Heart left ventricle (tissue), 16 donors: ENCODE measurements at regions of chr19 and their contacts with region 1.

Region 1: DNA sequence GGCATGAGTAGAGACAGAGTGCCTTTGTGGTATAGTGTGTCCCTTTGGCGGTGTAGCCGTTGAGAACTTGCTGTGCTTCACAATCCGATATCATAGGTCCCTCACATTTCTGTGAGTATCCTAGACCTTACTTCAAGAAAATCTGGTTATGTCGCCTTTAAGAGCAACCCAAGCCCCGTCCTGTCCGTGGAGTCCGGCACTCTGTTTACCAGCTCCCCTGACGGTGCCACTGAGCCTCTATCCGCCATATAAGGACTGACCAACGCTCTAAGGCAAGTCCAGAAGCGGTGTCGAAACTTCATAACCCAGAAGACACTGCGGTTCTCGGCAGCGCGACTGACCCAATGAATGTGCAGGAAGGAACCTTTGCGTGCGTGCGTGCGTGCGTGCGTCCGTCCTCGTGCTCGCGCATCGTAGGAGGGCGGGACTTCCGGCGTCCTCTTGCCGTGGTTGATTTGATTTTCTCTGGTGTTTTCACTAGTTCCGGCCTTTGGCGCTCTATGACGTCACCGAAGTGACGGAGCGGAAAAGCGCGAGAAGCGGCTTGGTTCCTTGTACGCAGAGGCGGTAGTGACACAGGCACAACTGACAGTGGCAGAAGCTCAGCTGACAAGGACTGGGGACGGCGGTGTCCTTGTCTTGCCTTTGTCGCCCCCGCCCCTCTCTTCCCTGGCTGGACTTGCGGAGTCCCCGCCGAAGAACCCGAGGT is at the starts of genes TRAPPC2B and ZNF547:
- DNase-seq: peak; percentile 99 to 100 (median 99)
- ATAC-seq: peak; percentile 94 to 97 (median 96)
- H3K4me3 ChIP-seq: peak within 1 kb of the TSS; percentile 62 to 97 (median 82)
- H3K27ac ChIP-seq: peak within 1 kb of the TSS; percentile 83 to 98 (median 94)
- H3K4me1 ChIP-seq: peaks cover 0 to 37% (median 20%) of the 10 kb centered on the region in 12 donors
- H3K27me3 ChIP-seq: no peaks in the 10 kb centered on the region
- CTCF ChIP-seq: no peak
- POLR2A ChIP-seq: peak in 1 of 2 donors; percentile 68
- total RNA-seq, gene TRAPPC2B: 7.4 to 35.0 (median 12.3) TPM
- total RNA-seq, gene ZNF547: 1.9 to 3.7 (median 2.6) TPM

Region 2: DNA sequence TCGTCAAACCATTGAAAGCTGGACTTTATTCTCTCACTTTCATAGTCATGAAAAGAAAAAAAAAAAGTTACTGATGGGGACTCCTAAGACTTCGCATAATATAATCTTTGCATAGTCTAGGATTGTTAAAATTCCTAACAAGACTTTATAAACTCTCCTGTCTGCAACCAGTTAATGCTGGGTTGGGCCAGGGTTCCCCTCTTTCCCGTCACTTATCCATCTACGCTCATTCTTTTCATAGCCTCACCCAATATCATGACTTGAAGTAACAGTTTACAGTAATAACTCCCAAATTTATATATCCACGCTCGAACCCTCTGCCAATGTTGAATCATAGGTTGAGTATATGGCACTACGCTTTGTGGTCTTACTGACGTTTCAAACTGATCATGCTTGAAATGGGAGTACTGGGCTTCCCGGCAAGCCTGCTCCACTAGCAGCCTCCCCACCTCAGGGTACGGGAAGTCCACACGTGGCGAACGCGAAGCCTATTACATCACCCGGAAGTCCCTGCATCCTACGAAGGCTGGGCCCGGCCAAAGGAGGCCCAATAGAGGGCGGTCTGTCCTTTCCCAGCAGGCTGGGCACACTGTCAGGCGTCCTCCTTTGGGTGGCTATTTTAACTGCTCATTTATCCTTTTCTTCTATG is 83.6 kb before region 1 on chr19:
- intact Hi-C with region 1: loop called in 3 of 10 experiments (anchors 1 to 10 kb)
- DNase-seq: peak; percentile 92 to 95 (median 92)
- ATAC-seq: peak; percentile 96 to 98 (median 97)
- H3K4me3 ChIP-seq: peak overlapping the region; percentile 68 to 99 (median 92)
- H3K27ac ChIP-seq: peak overlapping the region; percentile 94 to 100 (median 99)
- H3K4me1 ChIP-seq: peaks cover 8 to 44% (median 29%) of the 10 kb centered on the region in 12 donors
- H3K27me3 ChIP-seq: no peaks in the 10 kb centered on the region
- CTCF ChIP-seq: peak in 10 of 12 donors; percentile 11 to 66 (median 46)
- POLR2A ChIP-seq: peak in 1 of 2 donors; percentile 54

Region 3: GRCh38 chr19:57350877-57351805 is 12.0 kb before region 1 on chr19 and contains the start of gene ZNF304:
- intact Hi-C with region 1: loop called in 1 of 10 experiments (anchors 1 kb)
- DNase-seq: peak; percentile 95 to 97 (median 96)
- ATAC-seq: peak; percentile 97 to 99 (median 98)
- H3K4me3 ChIP-seq: peak within 1 kb of the TSS; percentile 75 to 100 (median 92)
- H3K27ac ChIP-seq: peak within 1 kb of the TSS; percentile 41 to 91 (median 86)
- H3K4me1 ChIP-seq: peaks cover 0 to 44% (median 21%) of the 10 kb centered on the region in 12 donors
- H3K27me3 ChIP-seq: no peaks in the 10 kb centered on the region
- CTCF ChIP-seq: no peak
- POLR2A ChIP-seq: peak in 1 of 2 donors; percentile 43
- total RNA-seq, gene ZNF304: 7.0 to 14.5 (median 9.7) TPM

Region 4: DNA sequence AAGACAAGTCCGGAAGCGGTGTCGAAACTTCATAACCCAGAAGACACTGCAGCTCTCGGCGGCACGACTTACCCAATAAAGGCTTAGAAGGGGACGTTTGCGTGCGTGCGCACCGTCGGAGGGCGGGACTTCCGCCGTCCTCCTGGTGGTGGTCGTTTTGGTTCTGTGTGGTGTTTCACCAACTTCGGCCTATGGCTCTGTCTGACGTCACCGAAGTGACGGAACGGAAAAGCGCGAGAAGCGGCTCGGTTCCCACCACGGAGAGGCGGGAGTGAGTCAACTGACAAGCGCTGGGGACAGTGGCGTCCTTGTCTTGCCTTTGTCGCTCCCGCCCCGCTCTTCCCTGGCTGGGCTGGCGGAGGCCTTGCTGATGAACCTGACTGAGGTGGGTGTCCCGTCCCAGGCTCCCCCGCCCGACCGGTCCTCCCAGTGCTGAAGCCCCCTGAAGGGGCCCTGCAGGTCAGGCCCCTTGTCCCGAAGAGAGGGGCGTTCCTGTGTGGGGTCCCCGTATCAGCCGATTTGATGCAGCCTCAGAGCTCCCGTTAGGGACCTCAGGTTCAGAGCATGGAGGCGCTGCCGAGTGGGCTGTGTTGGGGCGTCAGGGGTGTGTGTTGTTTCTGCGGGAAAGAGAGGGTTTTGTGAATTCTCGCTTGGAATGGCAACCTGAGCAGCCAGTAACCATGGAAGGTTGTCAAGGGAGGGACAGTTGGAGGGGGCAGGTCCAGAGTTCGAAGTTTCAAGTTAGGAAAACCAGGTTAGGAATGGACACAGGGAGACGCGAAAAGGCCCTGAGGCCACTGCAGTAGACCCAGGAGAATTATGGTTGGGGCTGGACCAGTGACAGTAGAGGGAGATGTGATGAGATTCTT is 26.8 kb after region 1 on chr19 and contains the start of gene ZNF548:
- intact Hi-C with region 1: loop called in 1 of 10 experiments (anchors 2 kb)
- DNase-seq: peak; percentile 96 to 98 (median 97)
- ATAC-seq: peak; percentile 99 to 100 (median 100)
- H3K4me3 ChIP-seq: peak within 1 kb of the TSS; percentile 69 to 97 (median 82)
- H3K27ac ChIP-seq: peak within 1 kb of the TSS; percentile 82 to 98 (median 89)
- H3K4me1 ChIP-seq: peaks cover 0 to 27% (median 17%) of the 10 kb centered on the region in 12 donors
- H3K27me3 ChIP-seq: no peaks in the 10 kb centered on the region
- CTCF ChIP-seq: peak in 8 of 12 donors; percentile 8 to 49 (median 28)
- POLR2A ChIP-seq: peak; percentile 42 to 52
- total RNA-seq, gene ZNF548: 11.6 to 20.3 (median 15.3) TPM